ENCODE measurements at regions of chr6 and their contacts with region 1.

Region 1: DNA sequence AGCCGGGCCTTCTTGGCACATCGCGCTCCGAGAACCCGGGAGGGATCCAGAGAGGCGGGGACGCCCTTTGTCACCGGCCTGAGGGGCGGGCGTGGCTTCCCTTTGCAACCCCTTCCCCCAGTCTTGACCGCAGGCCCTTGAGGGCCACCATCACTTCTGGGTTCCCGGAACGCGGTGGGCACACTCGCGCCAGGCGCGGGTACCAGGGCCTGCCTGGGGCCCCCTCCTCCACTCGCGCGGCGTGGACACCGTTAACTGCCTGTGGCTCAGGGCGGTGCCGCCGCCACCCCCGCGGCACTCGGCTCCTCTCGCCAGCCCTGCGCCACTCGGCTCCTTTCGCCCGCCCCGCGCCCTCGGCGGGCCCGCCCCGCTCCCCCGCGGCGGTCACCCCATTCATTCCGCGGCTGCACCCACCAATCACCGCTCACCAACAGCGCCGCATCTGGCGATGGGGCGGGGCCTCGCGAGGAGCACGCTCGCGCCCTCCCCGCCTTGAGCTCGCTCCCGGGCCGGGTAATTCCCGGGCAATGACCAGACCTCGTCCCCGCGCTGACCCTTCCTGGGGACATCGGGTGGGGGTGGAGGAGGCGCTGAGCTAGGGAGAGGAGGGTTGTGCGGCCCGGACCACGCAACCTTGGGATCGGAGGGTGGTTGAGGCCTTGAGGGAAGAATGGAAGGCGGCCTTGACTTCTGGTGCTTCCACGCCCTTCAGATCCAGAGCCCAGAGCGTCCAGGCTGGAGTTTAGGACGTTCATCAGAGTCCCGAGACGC is 10.5 kb upstream of the ELOVL5 start:
- DNase-seq: peak; percentile 73 to 92 (median 86)
- ATAC-seq: peak; percentile 81 to 96 (median 94)
- H3K4me3 ChIP-seq: peak overlapping the region; percentile 78 to 93
- H3K4me3 Mint-ChIP-seq: peak overlapping the region; percentile 86 to 94 (median 89)
- H3K27ac ChIP-seq: peak overlapping the region; percentile 99
- H3K27ac Mint-ChIP-seq: peak overlapping the region; percentile 97 to 98
- H3K4me1 ChIP-seq: peaks cover 18 to 43% of the 10 kb centered on the region in 2 experiments
- H3K4me1 Mint-ChIP-seq: peaks cover 48 to 54% (median 50%) of the 10 kb centered on the region in 3 donors
- H3K27me3 ChIP-seq: no peaks in the 10 kb centered on the region
- H3K27me3 Mint-ChIP-seq: no peaks in the 10 kb centered on the region

Region 2: DNA sequence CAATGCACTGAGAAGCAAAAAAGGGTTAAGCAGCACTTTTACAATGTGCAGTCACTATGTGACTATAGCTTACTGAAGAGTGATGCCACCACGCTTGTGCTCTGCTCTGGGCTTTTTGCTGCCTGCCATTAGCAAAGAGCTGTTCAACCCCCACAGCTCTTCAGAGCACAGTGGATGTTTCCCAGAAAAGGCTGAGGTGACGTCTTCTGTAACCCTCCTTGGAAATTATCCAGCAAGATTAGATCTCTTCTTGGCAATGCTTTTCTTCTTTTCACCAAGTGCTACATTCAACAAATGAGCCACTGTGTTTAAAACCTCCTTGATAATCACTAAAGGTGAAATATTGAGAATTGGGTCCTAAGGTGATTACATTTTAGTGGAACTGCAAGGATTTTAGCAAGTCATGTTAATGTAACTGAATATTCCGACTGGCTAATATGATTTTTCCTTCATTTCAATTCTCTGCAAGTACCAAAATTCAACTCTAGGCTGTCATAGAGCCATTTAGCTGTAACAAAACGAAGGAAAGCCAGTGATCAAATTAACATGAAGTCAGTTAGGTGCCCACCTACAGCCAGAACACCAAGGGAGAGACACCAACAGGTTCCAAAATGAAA is 45.4 kb before region 1 on chr6:
- CTCF ChIA-PET with region 1: interaction called, 3 to 13 read pairs
- POLR2A ChIA-PET with region 1: no interaction called
- DNase-seq: no peak
- ATAC-seq: no peak
- H3K4me3 ChIP-seq: no peak overlapping the region
- H3K4me3 Mint-ChIP-seq: peak overlapping the region in 1 of 3 donors; percentile 36
- H3K27ac ChIP-seq: no peak overlapping the region
- H3K27ac Mint-ChIP-seq: peak overlapping the region in 1 of 2 donors; percentile 72
- H3K4me1 ChIP-seq: peaks cover 38 to 42% of the 10 kb centered on the region in 2 experiments
- H3K4me1 Mint-ChIP-seq: peaks cover 86 to 91% (median 87%) of the 10 kb centered on the region in 3 donors
- H3K27me3 ChIP-seq: no peaks in the 10 kb centered on the region
- H3K27me3 Mint-ChIP-seq: no peaks in the 10 kb centered on the region

Region 3: DNA sequence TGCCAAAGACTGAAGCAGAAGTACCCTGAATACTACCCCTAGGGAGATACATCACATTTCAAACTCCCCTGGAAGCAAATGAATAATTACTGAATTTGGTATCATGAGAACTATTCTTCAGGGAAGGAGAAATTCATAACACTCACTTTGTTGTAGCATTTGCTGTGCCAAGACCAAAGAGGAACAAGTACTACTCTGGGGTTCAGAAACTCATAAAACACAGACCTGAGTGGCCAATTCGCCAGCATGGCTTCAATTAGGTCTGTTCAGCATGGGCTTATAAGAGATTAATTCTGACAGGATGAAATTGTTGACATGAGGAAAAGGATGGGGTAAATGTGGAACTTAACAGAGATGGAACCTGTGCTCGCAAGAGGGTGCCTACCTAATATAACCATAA is 17.0 kb before region 1 on chr6:
- CTCF ChIA-PET with region 1: interaction called, 3 to 9 read pairs
- POLR2A ChIA-PET with region 1: interaction called, 3 to 33 read pairs
- DNase-seq: no peak
- ATAC-seq: no peak
- H3K4me3 ChIP-seq: no peak overlapping the region
- H3K4me3 Mint-ChIP-seq: peak overlapping the region in 2 of 3 donors; percentile 8 to 35
- H3K27ac ChIP-seq: no peak overlapping the region
- H3K27ac Mint-ChIP-seq: peak overlapping the region; percentile 78 to 82
- H3K4me1 ChIP-seq: peaks cover 28 to 53% of the 10 kb centered on the region in 2 experiments
- H3K4me1 Mint-ChIP-seq: peaks cover 93 to 96% (median 95%) of the 10 kb centered on the region in 3 donors
- H3K27me3 ChIP-seq: no peaks in the 10 kb centered on the region
- H3K27me3 Mint-ChIP-seq: no peaks in the 10 kb centered on the region

Region 4: DNA sequence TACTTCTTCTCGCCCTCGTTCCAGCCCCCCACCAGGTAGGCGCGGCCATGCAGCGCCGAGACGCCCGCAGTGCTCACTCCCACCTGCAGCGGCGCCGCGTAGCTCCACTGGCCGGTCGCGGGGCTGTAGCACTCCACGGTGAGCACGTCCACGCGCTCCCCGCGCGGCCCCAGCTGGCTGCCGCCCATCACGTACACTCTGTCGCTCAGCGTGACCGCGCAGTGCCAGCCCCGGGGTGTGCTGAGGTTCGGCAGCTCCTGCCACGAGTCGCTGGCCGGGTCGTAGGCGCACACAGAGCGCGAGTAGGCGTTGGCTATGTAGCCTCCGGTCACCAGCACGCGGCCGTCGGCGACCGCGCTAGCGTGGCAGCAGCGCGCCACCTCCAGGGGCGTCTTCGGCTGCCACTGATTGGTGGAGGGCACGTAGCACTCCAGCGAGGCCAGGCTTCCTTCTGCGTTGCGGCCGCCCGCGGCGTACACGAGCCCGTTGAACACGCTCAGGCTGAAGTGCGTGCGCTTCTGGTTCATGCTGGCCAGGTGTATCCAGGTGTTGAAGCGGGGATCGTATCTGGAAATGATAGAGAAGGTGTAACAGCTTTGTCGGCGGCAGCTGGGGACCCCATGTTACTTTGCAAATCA is 292.6 kb after region 1 on chr6:
- CTCF ChIA-PET with region 1: no interaction called
- POLR2A ChIA-PET with region 1: interaction called in 1 of 2 experiments, 15 read pairs
- DNase-seq: peak; percentile 60 to 87 (median 75)
- ATAC-seq: peak; percentile 91 to 94 (median 91)
- H3K4me3 ChIP-seq: peak overlapping the region; percentile 60 to 84
- H3K4me3 Mint-ChIP-seq: peak overlapping the region; percentile 85 to 96 (median 95)
- H3K27ac ChIP-seq: peak overlapping the region; percentile 60
- H3K27ac Mint-ChIP-seq: peak overlapping the region; percentile 90 to 95
- H3K4me1 ChIP-seq: peaks cover 6 to 16% of the 10 kb centered on the region in 2 experiments
- H3K4me1 Mint-ChIP-seq: peaks cover 21 to 35% (median 28%) of the 10 kb centered on the region in 3 donors
- H3K27me3 ChIP-seq: peaks cover 4 to 5% of the 10 kb centered on the region in 2 experiments
- H3K27me3 Mint-ChIP-seq: no peaks in the 10 kb centered on the region

Measured in T-cell (primary cell).